ENCODE measurements at regions of chr9 and their contacts with region 1.

Region 1: GRCh38 chr9:128103589-128103962 is 24.0 kb downstream of the PTGES2 start:
- DNase-seq: peak in 2 of 5 donors; percentile 41 to 45
- H3K4me3 ChIP-seq: no peak overlapping the region
- H3K27ac ChIP-seq: peak overlapping the region; percentile 52 to 63
- H3K4me1 ChIP-seq: peaks cover 47% of the 10 kb centered on the region
- H3K27me3 ChIP-seq: no peaks in the 10 kb centered on the region
- CTCF ChIP-seq: no peak
- EP300 ChIP-seq: no peak
- POLR2A ChIP-seq: no peak

Region 2: GRCh38 chr9:127751269-127752054 is 352.1 kb before region 1 on chr9:
- intact Hi-C with region 1: no loop called
- DNase-seq: peak in 1 of 5 donors; percentile 61
- H3K4me3 ChIP-seq: no peak overlapping the region
- H3K27ac ChIP-seq: no peak overlapping the region
- H3K4me1 ChIP-seq: no peaks in the 10 kb centered on the region
- H3K27me3 ChIP-seq: no peaks in the 10 kb centered on the region
- CTCF ChIP-seq: no peak
- EP300 ChIP-seq: no peak
- POLR2A ChIP-seq: no peak

Region 3: GRCh38 chr9:128043467-128043868 is 60.1 kb before region 1 on chr9:
- intact Hi-C with region 1: loop called in 1 of 4 experiments (anchors 5 kb)
- DNase-seq: peak in 4 of 5 donors; percentile 56 to 81 (median 68)
- H3K4me3 ChIP-seq: no peak overlapping the region
- H3K27ac ChIP-seq: peak overlapping the region; percentile 40 to 55
- H3K4me1 ChIP-seq: peaks cover 27% of the 10 kb centered on the region
- H3K27me3 ChIP-seq: no peaks in the 10 kb centered on the region
- CTCF ChIP-seq: no peak
- EP300 ChIP-seq: no peak
- POLR2A ChIP-seq: no peak

Region 4: DNA sequence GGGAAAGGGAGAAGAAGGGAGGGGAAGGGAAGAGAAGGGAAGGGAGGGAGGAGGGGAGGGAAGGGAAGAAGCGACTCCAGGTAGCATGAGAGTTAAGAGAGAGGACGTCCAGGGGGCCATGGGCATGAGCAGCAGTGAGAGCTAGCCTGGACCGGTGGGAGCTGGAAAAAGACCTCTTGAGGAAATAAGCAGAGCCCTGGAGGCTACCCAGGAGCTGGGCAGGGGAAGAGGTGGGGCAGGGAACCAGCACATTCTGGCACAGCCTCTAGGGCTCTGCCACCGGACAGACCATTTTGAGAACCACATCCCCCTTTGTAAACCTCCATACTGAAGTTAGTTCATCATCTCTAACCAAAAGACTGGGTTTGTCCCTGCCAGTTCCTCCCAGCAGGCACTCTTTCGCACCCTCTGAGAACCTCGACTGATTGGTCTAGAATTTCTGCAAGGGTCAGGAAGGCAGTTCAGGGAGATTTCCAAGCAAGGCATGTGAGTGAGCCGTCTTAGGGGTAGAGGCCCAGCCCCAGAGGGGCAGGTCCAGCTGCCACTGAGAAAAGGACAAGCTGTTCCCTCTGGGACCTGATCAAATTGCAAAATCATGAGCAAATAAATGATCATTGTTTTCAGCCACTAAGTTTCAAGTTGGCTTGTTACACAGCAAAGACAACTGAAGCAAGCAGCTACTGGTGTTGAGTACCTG is 48.1 kb before region 1 on chr9:
- intact Hi-C with region 1: loop called in 2 of 4 experiments (anchors 5 to 10 kb)
- DNase-seq: peak; percentile 59 to 69 (median 60)
- H3K4me3 ChIP-seq: no peak overlapping the region
- H3K27ac ChIP-seq: peak overlapping the region; percentile 42 to 89
- H3K4me1 ChIP-seq: peaks cover 21% of the 10 kb centered on the region
- H3K27me3 ChIP-seq: no peaks in the 10 kb centered on the region
- CTCF ChIP-seq: no peak
- EP300 ChIP-seq: peak; percentile 58
- POLR2A ChIP-seq: no peak

Measured in ovary (tissue), 10 donors.